Activated naive CD4-positive, alpha-beta T cell treated with anti-CD3 and anti-CD28 coated beads for 36 hours (primary cell): ENCODE measurements at regions of chr7 and their contacts with region 1.

Region 1: DNA sequence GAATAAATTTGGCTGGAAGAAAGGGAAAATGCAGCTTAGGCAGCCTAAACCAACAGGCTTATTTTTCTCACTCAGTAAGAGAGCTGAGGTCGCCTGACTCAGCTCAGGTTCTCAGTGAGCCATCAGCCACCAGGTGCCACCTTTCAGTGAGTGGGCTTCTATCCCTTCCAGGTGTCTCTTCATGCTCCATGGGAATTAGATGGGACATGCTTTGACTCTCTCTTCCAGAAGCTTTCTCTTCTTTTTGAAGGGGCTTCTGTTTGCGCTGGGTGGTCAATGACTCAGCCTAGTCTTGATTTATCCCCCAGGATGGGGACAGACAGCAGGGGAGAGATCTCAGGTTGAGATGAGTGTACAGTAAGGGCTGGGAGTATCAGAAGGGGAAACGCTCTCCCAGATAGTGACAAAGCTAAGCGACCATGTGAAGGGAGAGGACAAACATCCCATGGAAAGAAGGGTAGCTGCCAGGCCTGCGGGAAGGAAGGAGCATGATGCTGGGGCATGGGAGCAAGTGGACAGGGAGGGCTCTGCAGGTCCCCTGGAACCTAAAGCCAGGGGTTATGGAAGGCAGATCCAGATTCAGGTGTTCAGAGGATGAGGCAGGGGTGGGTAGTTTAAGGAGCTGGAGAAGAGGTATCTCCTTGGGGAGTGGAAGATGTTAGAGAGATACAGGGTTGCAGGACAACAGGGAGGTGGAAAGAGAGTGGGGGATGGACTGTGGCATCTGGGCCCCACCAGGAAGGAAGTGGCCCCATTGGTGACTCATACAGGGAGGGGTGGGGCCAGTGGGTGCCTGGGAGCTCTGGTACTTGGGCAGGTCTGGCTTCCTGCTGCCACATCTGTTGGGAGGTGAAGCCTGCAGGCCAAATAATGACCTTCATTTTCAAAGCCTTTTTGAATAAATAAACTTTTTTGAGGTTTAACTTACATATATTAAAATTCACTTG is 32.5 kb downstream of the OGDH start:
- DNase-seq: peak; percentile 92
- H3K4me3 Mint-ChIP-seq: peak overlapping the region; percentile 54
- H3K27ac Mint-ChIP-seq: peak overlapping the region; percentile 97
- H3K4me1 Mint-ChIP-seq: peaks cover 64% of the 10 kb centered on the region
- H3K27me3 Mint-ChIP-seq: no peaks in the 10 kb centered on the region

Region 2: GRCh38 chr7:44581879-44582603 is 56.8 kb before region 1 on chr7 and contains the start of gene TMED4:
- CTCF ChIA-PET with region 1: interaction called, 3 read pairs
- intact Hi-C with region 1: loop called (anchors 1 kb)
- DNase-seq: peak; percentile 100
- H3K4me3 Mint-ChIP-seq: peak within 1 kb of the TSS; percentile 90
- H3K27ac Mint-ChIP-seq: peak within 1 kb of the TSS; percentile 87
- H3K4me1 Mint-ChIP-seq: peaks cover 33% of the 10 kb centered on the region
- H3K27me3 Mint-ChIP-seq: peaks cover 2% of the 10 kb centered on the region
- total RNA-seq, gene TMED4: 77.3 to 81.8 TPM

Region 3: DNA sequence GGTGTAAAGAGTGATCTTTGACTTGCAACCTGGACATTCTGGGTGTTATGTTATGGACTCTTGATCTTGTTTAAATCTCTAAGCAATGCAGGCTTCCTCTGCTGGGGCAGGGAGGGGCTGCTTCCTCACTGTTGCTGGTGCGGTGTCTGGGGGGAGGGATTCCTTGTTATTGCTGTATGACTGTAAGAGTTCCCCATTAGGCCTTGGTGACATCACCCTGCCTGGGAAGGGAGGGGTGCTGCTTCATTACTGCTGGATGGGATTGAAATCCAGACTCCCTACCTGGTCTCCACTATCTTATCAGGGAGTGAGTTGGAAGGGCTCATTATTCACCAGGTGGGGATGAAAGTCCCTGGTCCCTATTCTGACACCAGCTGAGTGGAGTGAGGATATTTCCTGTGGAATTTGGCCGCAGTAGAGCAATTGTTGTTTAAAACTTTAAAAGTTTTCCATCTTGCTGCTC is 23.7 kb before region 1 on chr7:
- CTCF ChIA-PET with region 1: interaction called, 52 read pairs
- intact Hi-C with region 1: loop called (anchors 1 kb)
- DNase-seq: peak; percentile 57
- H3K4me3 Mint-ChIP-seq: no peak overlapping the region
- H3K27ac Mint-ChIP-seq: peak overlapping the region; percentile 25
- H3K4me1 Mint-ChIP-seq: peaks cover 60% of the 10 kb centered on the region
- H3K27me3 Mint-ChIP-seq: no peaks in the 10 kb centered on the region

Region 4: GRCh38 chr7:44735403-44736165 is 96.7 kb after region 1 on chr7:
- CTCF ChIA-PET with region 1: no interaction called
- intact Hi-C with region 1: loop called (anchors 1 kb)
- DNase-seq: peak; percentile 83
- H3K4me3 Mint-ChIP-seq: no peak overlapping the region
- H3K27ac Mint-ChIP-seq: peak overlapping the region; percentile 79
- H3K4me1 Mint-ChIP-seq: peaks cover 31% of the 10 kb centered on the region
- H3K27me3 Mint-ChIP-seq: no peaks in the 10 kb centered on the region

Region 5: DNA sequence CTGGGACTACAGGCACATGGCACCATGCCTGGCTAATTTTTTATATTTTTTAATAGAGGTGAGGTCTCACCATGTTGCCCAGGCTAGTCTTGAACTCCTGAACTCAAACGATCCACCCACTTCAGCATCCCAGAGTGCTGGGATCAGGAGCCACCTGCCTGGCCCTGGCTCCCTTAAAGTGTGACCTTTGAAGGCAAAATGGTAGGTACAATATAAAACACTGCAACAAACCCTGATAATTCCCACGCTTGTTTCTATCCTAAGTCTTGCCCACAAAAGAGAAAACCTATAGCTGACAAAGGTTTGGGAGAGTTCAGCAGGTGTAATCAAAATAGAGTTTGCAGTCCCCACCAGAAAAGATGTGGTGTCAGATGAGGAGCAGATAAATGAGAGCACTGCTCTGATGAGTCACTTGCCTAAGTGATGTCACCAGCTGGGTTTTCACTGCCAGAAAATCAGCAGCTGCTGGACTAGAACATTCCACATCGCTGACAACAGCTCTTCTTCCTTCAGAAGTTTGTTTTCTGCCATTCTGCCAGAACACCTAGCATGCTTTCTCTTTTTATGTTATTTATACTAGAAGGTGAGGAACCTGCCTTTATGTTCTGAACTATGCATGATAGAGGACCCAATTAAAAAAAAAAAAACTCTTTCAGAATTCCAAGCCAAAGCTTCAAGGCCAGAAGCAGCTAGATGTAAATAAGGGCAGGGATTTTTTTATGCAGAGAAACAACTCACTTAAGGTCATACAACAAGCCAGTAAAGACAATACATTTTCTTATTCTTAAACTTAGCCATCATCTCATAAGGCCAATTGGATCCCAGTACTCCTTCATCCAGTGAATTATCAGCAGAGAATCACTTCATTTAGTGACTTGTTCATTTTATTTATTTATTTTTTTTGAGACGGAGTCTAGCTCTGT is 228.4 kb after region 1 on chr7:
- CTCF ChIA-PET with region 1: no interaction called
- intact Hi-C with region 1: no loop called
- DNase-seq: peak; percentile 72
- H3K4me3 Mint-ChIP-seq: no peak overlapping the region
- H3K27ac Mint-ChIP-seq: peak overlapping the region; percentile 13
- H3K4me1 Mint-ChIP-seq: peaks cover 7% of the 10 kb centered on the region
- H3K27me3 Mint-ChIP-seq: no peaks in the 10 kb centered on the region

Region 6: DNA sequence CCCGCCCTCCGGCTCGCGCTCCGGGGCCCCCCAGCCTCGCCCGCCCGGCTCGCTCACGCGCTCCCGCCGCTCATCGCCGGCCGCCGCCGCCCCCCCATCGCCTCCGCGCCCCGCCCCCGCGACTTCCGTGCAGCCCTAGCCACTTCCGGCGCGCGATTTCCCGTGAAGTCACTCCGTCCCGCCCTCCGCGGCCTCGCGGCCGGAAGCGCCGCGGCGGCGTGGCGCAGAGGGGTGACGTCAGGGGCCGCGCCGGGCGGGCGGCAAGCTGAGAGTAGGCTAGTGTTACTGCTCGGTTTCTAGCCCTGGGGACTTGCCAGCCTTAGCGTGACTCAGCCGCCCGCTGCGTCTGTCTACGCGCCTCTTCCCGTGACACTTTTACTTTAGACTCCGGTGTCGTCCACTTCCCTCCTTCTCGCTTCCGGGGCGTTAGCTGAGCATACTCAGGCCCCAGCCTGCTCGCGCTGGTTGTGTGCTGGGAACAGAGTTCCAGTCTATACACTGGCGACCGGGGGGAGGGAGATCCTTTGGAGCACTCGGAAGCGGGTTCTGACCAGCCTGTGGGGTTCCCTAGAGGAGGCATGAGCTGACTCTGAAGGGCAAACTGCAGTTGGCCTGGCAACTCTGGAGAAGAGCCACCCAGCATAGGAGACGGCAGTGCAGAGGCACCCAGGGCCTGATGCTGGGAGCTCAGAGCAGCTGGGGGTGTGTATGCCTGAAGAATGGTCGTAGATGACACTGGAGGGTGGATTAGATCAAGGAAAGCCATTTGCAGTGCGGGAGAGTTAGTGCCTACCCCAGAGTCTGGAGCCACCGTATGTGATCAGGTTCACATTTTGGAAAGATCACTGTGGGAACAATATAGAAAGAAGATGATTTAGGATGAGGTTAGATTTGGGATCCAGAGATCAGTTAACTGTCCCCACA is 246.8 kb after region 1 on chr7 and contains the start of gene PURB:
- CTCF ChIA-PET with region 1: no interaction called
- intact Hi-C with region 1: loop called (anchors 1 kb)
- DNase-seq: peak; percentile 98
- H3K4me3 Mint-ChIP-seq: peak within 1 kb of the TSS; percentile 96
- H3K27ac Mint-ChIP-seq: peak within 1 kb of the TSS; percentile 100
- H3K4me1 Mint-ChIP-seq: peaks cover 46% of the 10 kb centered on the region
- H3K27me3 Mint-ChIP-seq: no peaks in the 10 kb centered on the region
- total RNA-seq, gene PURB: 12.9 to 13.1 TPM

Region 7: GRCh38 chr7:45080265-45080962 is 441.5 kb after region 1 on chr7:
- CTCF ChIA-PET with region 1: no interaction called
- intact Hi-C with region 1: no loop called
- DNase-seq: peak; percentile 5
- H3K4me3 Mint-ChIP-seq: no peak overlapping the region
- H3K27ac Mint-ChIP-seq: no peak overlapping the region
- H3K4me1 Mint-ChIP-seq: no peaks in the 10 kb centered on the region
- H3K27me3 Mint-ChIP-seq: no peaks in the 10 kb centered on the region

Region 8: GRCh38 chr7:45543461-45543860 is 904.6 kb after region 1 on chr7:
- CTCF ChIA-PET with region 1: no interaction called
- intact Hi-C with region 1: loop called (anchors 10 kb)
- DNase-seq: no peak
- H3K4me3 Mint-ChIP-seq: no peak overlapping the region
- H3K27ac Mint-ChIP-seq: no peak overlapping the region
- H3K4me1 Mint-ChIP-seq: no peaks in the 10 kb centered on the region
- H3K27me3 Mint-ChIP-seq: no peaks in the 10 kb centered on the region